ENCODE measurements at regions of chr1 and their contacts with region 1.

Region 1: DNA sequence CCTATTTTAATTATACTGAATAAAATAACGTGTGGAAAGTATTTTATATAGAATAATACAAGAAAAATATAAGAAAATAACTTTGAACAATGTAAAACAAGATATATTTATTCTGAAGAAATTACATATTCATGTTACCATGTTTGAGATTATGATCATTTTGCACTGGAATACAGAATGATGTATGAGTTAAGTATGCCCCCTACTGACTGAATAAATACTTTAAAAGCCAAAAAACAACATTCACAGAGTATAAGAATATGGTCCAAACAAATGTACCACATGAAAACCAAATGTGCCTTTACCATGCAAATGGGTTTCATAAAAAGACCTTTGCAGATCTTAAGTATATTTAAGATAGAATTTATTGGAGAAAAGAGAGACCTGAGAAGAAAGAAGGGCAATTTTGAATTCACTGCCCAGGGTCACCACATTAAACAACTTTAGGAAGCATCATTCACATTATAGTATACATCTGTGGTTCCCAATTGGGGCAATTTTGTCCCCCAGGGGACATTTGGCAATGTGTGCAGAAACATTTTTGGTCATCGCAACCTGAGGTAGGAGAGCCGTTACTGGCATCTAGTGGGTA is 136.6 kb upstream of the GFI1 start:
- DNase-seq: no peak
- H3K4me3 ChIP-seq: no peak overlapping the region
- H3K27ac ChIP-seq: no peak overlapping the region
- H3K4me1 ChIP-seq: no peaks in the 10 kb centered on the region
- H3K27me3 ChIP-seq: no peaks in the 10 kb centered on the region
- CTCF ChIP-seq: peak in 3 of 4 experiments; percentile 19 to 32 (median 24)
- POLR2A ChIP-seq: no peak

Region 2: DNA sequence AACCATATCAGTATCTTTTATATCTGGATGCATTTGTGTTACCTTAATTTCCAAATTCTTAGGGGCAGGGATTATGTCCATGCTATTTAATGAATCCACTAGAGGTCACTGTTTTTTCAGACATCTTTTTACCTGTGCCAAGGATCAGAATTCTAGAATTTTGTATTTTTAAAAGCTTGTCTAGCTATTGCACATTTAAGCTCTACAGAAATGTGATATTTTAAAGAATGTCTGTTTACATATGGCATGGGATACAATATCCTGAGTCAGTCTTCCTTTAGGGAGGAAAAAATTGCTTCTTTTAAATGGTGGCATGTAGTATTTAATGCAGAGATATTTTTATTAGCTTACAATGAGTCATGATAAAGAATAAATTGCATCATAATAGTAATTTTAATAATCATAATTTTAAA is 313.1 kb before region 1 on chr1:
- intact Hi-C with region 1: loop called (anchors 5 kb)
- DNase-seq: no peak
- H3K4me3 ChIP-seq: no peak overlapping the region
- H3K27ac ChIP-seq: no peak overlapping the region
- H3K4me1 ChIP-seq: no peaks in the 10 kb centered on the region
- H3K27me3 ChIP-seq: no peaks in the 10 kb centered on the region
- CTCF ChIP-seq: peak; percentile 12 to 56 (median 45)
- POLR2A ChIP-seq: no peak

Region 3: DNA sequence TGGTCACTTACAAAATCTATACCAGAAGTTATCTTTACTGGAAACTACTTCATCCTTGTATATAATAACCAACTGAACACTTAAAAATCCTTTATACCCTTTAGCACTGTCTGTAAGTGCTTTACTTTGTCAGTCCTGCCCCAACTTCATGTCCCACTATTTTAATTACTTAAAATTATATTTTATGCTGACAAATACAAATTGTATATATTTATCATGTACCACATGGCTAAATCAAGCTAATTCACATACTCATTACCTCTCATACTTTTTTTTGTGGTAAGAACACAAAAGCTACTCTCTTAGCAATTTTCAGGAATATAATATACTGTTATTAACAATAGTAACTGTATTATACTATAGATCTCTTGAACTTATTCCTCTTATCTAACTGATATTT is 98.6 kb after region 1 on chr1:
- intact Hi-C with region 1: no loop called
- DNase-seq: no peak
- H3K4me3 ChIP-seq: no peak overlapping the region
- H3K27ac ChIP-seq: no peak overlapping the region
- H3K4me1 ChIP-seq: no peaks in the 10 kb centered on the region
- H3K27me3 ChIP-seq: no peaks in the 10 kb centered on the region
- CTCF ChIP-seq: no peak
- POLR2A ChIP-seq: no peak